Common myeloid progenitor, CD34-positive (primary cell): ENCODE measurements at regions of chr17 and their contacts with region 1.

Region 1: GRCh38 chr17:44522883-44523671 is 19.9 kb upstream of the GPATCH8 start:
- DNase-seq: peak; percentile 78 to 83 (median 81)
- H3K4me3 ChIP-seq: peak overlapping the region in 1 of 7 experiments; percentile 42
- H3K27ac ChIP-seq: no peak overlapping the region
- H3K4me1 ChIP-seq: peaks cover 0 to 4% (median 2%) of the 10 kb centered on the region in 4 experiments
- H3K27me3 ChIP-seq: no peaks in the 10 kb centered on the region

Region 2: GRCh38 chr17:44503147-44504029 is 19.7 kb before region 1 on chr17 and contains the start of gene GPATCH8:
- CTCF ChIA-PET with region 1: interaction called, 21 read pairs
- POLR2A ChIA-PET with region 1: no interaction called
- DNase-seq: peak; percentile 93 to 95 (median 95)
- H3K4me3 ChIP-seq: peak within 1 kb of the TSS; percentile 83 to 98 (median 91)
- H3K27ac ChIP-seq: peak within 1 kb of the TSS; percentile 90 to 97
- H3K4me1 ChIP-seq: peaks cover 13 to 31% (median 21%) of the 10 kb centered on the region in 4 experiments
- H3K27me3 ChIP-seq: no peaks in the 10 kb centered on the region